ENCODE measurements at regions of chr20 and their contacts with region 1.

Region 1: DNA sequence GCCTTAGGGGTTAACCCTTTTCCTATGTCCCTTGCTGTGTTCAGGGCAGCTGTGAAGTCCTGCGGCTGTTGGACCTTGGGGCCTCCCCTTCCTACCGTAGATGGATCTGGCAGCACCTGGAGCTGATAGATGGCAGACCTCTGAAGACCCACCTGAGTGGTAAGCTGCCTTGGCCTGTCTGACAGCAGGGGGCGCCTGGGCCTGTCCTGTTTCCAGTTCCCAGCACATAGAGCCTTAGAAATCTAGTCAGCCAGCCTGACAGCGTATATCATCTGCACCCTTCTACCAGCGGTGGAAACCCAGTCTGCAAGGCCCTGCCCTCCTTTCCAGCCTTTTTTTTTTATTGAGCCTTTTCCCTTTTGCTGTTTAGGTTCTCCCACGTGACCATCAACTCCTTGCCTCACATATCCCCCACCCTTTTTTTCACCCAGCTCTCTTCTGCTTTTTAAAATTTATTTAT is 26.6 kb downstream of the CNBD2 start:
- DNase-seq: peak; percentile 82 to 89
- H3K4me3 ChIP-seq: no peak overlapping the region
- H3K27ac ChIP-seq: no peak overlapping the region
- H3K4me1 ChIP-seq: no peaks in the 10 kb centered on the region; a peak in 1 of 7 replicates
- H3K27me3 ChIP-seq: no peaks in the 10 kb centered on the region
- CTCF ChIP-seq: peak; percentile 88 to 92 (median 92)
- EP300 ChIP-seq: no peak
- POLR2A ChIP-seq: no peak
- RAD21 ChIP-seq: peak; percentile 90 to 94

Region 2: DNA sequence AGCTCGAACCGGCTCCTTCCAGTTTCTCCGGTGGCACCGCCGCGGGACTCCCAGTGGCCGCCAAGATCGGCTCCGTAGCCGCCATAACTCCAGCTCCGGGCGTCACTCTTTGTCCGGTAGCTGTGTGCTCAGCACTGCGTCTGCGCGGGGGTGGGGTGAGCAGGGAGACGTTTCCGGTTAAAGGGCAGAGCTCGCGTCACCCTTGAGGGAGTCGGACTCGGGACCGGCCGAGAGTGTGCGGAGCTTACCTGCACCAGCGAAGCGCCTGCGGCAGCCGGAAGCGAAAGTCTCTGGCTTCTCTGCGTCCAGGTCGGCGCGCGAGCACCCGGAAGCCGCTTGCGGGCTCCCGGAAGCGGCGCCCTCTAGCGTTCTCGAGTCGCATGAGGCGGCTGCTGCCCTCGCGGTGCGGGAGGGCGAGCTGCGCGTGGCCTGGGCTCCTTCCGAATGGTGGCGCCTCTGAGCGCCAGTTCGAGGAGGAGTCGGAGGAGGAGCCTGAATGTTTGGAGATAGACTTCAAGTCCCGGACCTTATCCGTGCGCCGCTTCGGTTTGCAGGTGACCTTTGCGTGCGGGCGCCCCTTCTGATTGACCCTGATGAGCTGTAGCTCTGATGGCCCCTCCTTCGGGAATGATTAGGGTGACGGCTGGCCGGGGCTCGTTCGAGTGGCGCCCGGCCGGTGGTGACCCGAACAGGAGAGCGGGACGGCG is 40.7 kb before region 1 on chr20 and contains the start of gene SCAND1:
- CTCF ChIA-PET with region 1: interaction called, 11 read pairs
- POLR2A ChIA-PET with region 1: interaction called, 7 read pairs
- DNase-seq: peak; percentile 95
- H3K4me3 ChIP-seq: peak within 1 kb of the TSS; percentile 75 to 95 (median 88)
- H3K27ac ChIP-seq: peak within 1 kb of the TSS; percentile 97
- H3K4me1 ChIP-seq: peaks cover 0 to 3% (median 0%) of the 10 kb centered on the region in 4 experiments; a peak in 2 of 7 replicates
- H3K27me3 ChIP-seq: no peaks in the 10 kb centered on the region
- CTCF ChIP-seq: peak; percentile 95 to 99 (median 98)
- EP300 ChIP-seq: peak in 1 of 2 experiments; percentile 73; a peak in 2 of 3 replicates
- POLR2A ChIP-seq: peak; percentile 89 to 98
- RAD21 ChIP-seq: peak; percentile 47 to 55
- total RNA-seq, gene SCAND1: 73.1 and 86.0 TPM in 2 replicates

Region 3: DNA sequence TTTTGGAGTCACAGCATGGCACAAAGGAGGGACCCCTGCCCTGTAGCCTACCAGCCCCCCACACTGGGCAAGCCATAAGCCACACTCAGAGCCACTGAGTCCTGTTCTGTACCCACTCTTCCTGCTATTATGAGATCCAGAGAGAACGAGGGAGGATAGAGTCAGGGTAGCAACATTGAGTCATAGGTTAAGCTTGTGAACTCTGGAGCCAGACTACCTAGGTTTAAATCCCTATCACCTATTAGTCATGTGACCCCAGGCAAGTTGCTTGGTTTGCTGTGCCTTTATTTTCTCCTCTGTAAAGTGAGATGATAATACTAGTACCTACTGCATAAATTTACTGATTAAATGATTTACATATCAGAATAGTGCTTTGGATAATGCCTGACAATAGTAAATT is 26.1 kb before region 1 on chr20:
- CTCF ChIA-PET with region 1: interaction called, 13 read pairs
- POLR2A ChIA-PET with region 1: no interaction called
- DNase-seq: no peak
- H3K4me3 ChIP-seq: no peak overlapping the region
- H3K27ac ChIP-seq: no peak overlapping the region
- H3K4me1 ChIP-seq: peaks cover 0 to 2% (median 0%) of the 10 kb centered on the region in 4 experiments; a peak in 2 of 7 replicates
- H3K27me3 ChIP-seq: no peaks in the 10 kb centered on the region; a peak in 1 of 7 replicates
- CTCF ChIP-seq: no peak
- EP300 ChIP-seq: no peak
- POLR2A ChIP-seq: no peak
- RAD21 ChIP-seq: no peak

Region 4: DNA sequence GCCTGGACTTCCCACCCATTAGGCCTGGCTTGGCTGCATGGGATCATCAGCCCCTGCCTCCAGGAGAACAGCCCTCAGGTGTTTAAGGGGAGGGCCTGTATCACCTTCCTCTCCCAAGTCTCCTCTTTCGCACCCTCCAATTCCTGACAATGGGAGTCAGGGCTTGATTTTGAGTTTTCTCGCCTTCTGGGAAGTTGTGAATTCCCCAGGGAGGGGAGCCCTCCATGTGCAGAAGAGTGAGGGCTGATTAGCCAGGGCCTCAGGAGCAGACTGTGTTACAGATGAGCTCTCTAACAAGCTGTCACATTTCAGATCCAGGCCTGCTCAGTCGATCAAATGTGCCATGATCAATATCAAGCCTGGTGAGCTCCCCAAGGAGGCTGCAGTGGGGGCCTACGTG is 15.8 kb after region 1 on chr20:
- CTCF ChIA-PET with region 1: interaction called, 40 read pairs
- POLR2A ChIA-PET with region 1: interaction called, 4 read pairs
- DNase-seq: no peak
- H3K4me3 ChIP-seq: no peak overlapping the region
- H3K27ac ChIP-seq: no peak overlapping the region
- H3K4me1 ChIP-seq: no peaks in the 10 kb centered on the region
- H3K27me3 ChIP-seq: no peaks in the 10 kb centered on the region
- CTCF ChIP-seq: no peak
- EP300 ChIP-seq: no peak
- POLR2A ChIP-seq: no peak
- RAD21 ChIP-seq: no peak

Region 5: GRCh38 chr20:36030149-36030548 is 35.1 kb after region 1 on chr20:
- CTCF ChIA-PET with region 1: interaction called, 14 read pairs
- POLR2A ChIA-PET with region 1: no interaction called
- DNase-seq: no peak
- H3K4me3 ChIP-seq: no peak overlapping the region
- H3K27ac ChIP-seq: no peak overlapping the region
- H3K4me1 ChIP-seq: no peaks in the 10 kb centered on the region
- H3K27me3 ChIP-seq: no peaks in the 10 kb centered on the region
- CTCF ChIP-seq: no peak
- EP300 ChIP-seq: no peak
- POLR2A ChIP-seq: no peak
- RAD21 ChIP-seq: no peak

Region 6: DNA sequence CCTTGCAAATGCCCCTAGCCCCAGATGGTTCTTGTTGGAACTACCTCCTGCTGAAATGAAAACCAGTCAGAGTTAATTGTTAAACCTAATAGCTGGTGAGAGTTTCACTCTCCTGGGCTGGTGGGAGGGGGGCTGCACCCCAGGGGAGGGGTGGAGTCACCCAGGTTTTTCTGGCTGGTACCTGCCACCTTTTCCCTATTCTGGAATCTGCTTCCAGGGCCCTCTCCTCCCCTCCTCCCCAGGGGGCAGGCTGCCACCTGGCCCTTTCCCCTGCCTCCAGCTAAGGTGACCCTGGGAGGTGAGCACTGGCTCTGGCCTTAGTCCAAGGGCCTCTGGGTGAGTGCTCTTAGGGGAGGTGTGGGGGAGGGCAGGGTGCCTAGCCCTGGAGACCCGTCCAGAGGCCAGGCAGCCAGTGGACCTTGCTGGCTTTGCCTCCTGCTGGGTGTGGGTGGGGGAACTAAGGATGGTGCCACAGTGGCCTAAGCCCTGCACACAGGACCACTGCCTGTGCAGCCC is 110.7 kb after region 1 on chr20:
- CTCF ChIA-PET with region 1: interaction called, 14 read pairs
- POLR2A ChIA-PET with region 1: no interaction called
- DNase-seq: no peak
- H3K4me3 ChIP-seq: no peak overlapping the region
- H3K27ac ChIP-seq: no peak overlapping the region
- H3K4me1 ChIP-seq: peaks cover 0 to 5% (median 1%) of the 10 kb centered on the region in 4 experiments; a peak in 2 of 7 replicates
- H3K27me3 ChIP-seq: peaks cover 0 to 15% (median 11%) of the 10 kb centered on the region in 4 experiments; a peak in 6 of 7 replicates
- CTCF ChIP-seq: no peak
- EP300 ChIP-seq: no peak
- POLR2A ChIP-seq: no peak
- RAD21 ChIP-seq: no peak

Region 7: GRCh38 chr20:36145877-36146707 is 151.1 kb after region 1 on chr20:
- CTCF ChIA-PET with region 1: interaction called, 244 read pairs
- POLR2A ChIA-PET with region 1: no interaction called
- DNase-seq: no peak
- H3K4me3 ChIP-seq: no peak overlapping the region
- H3K27ac ChIP-seq: no peak overlapping the region
- H3K4me1 ChIP-seq: no peaks in the 10 kb centered on the region; a peak in 1 of 7 replicates
- H3K27me3 ChIP-seq: no peaks in the 10 kb centered on the region; a peak in 1 of 7 replicates
- CTCF ChIP-seq: no peak
- EP300 ChIP-seq: no peak
- POLR2A ChIP-seq: no peak
- RAD21 ChIP-seq: no peak

Measured in H1 (cell line).